BJ (cell line): ENCODE measurements at regions of chr12 and their contacts with region 1.

Region 1: DNA sequence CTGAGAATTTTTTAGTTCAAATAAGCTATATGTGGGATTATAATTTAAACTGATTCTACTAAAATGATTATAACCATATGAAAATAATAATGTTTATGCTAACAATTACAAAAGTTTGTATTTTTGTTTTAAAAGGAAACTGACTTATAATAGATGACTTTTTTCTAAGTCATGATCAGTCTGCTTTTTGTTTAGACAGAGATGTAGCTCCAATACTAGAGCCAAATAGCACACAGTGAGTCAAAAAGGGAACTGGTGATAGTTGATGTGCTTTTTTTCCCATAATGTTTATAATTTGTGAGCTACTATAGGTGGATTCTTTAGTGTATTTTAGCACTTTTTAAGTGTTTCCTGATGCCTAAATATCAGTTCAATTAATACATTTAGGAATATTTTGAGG is 28.3 kb downstream of the TMPO start:
- DNase-seq: no peak
- H3K4me3 ChIP-seq: no peak overlapping the region
- H3K27me3 ChIP-seq: no peaks in the 10 kb centered on the region
- CTCF ChIP-seq: no peak

Region 2: GRCh38 chr12:98424726-98425401 is 118.8 kb before region 1 on chr12:
- CTCF ChIA-PET with region 1: no interaction called
- POLR2A ChIA-PET with region 1: no interaction called
- DNase-seq: peak; percentile 46
- H3K4me3 ChIP-seq: no peak overlapping the region
- H3K27me3 ChIP-seq: no peaks in the 10 kb centered on the region
- CTCF ChIP-seq: peak; percentile 68

Region 3: DNA sequence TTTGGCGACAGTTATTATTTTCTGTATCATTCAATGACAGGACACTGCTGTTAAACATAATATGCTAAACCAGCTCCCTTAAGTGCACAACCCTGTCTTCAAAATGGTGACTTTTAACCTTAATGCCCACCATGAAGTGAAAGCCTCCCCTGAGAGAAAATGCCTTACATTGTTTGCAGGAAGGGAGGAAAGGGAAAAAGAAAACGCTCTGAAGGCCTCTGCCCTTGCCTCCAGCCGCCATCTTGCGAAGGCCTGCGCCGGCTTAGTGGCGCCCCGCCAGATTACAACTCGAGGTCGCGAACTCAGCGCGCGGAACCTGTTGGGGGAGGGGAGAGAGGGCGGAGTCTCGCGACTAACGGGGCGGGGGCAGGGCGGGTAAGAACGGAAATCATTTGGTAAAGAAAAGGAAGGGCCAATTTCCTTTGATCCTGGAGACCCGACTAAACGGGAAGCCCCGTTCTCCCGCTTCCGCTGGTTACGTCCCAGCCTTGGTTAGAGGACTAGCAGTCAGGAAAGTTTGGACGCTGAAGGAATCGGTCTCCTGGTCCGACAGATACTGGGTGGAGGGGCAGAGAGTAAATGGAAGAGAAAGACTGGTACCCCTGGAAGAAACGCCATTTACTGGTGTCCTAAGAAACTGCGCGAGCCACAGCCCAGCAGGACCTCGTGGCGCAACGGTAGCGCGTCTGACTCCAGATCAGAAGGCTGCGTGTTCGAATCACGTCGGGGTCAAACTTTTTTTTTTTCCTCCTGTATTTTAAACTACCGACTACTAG is 39.9 kb before region 1 on chr12:
- CTCF ChIA-PET with region 1: no interaction called
- POLR2A ChIA-PET with region 1: no interaction called
- DNase-seq: peak; percentile 45
- H3K4me3 ChIP-seq: peak overlapping the region; percentile 85
- H3K27me3 ChIP-seq: no peaks in the 10 kb centered on the region
- CTCF ChIP-seq: no peak

Region 4: DNA sequence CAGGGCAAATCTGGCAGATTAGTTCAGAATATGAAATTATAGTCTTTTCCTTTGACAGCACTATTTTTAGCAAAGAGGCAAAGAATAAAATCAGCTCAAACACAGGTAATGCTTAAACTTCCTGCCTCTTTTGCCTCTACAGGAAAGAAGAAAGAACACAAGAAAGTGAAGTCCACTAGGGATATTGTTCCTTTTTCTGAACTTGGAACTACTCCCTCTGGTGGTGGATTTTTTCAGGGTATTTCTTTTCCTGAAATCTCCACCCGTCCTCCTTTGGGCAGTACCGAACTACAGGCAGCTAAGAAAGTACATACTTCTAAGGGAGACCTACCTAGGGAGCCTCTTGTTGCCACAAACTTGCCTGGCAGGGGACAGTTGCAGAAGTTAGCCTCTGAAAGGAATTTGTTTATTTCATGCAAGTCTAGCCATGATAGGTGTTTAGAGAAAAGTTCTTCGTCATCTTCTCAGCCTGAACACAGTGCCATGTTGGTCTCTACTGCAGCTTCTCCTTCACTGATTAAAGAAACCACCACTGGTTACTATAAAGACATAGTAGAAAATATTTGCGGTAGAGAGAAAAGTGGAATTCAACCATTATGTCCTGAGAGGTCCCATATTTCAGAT is 10.9 kb before region 1 on chr12:
- CTCF ChIA-PET with region 1: interaction called, 12 read pairs
- POLR2A ChIA-PET with region 1: no interaction called
- DNase-seq: no peak
- H3K4me3 ChIP-seq: no peak overlapping the region
- H3K27me3 ChIP-seq: no peaks in the 10 kb centered on the region
- CTCF ChIP-seq: peak; percentile 58